Posterior vena cava (tissue), 2 donors: ENCODE measurements at regions of chr1 and their contacts with region 1.

Region 1: GRCh38 chr1:30379684-30380624 is 343.4 kb downstream of the MATN1 start:
- DNase-seq: peak; percentile 66

Region 2: DNA sequence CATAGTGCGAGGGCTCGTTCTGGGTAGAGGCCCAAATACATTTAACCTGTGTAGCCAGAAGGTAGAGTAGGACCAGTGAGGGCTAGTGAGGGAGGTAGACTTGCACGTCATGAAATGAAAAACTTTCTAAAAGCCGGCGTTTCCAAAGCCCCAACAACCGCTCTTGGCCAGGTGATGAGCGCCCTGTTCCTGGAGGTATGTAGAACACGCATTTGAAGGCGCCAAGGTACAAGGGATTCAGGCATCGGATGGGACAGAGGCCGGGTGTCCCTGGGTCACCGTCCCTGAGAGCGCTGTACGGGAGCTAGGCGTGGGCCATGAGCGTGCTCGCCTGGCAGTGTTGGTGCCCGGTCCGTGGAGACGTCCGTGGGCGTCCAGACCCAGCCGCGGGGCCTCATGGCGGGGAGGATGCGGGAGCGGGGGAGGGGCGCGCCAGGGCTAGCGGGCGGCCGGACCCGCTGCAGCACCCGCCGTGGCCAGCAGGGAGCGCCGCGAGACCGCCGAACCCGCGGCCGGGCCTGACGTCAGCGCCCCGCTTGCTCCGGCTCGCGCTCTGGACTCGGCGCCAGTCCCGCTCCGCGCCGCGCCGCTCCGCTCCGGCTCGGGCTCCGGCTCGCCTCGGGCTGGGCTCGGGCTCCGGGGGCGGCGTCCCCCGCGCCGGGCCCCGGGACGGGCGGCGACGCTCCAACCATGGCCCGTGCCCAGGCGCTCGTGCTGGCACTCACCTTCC is 1143.8 kb before region 1 on chr1 and contains the start of gene PTPRU:
- intact Hi-C with region 1: loop called in 1 of 2 experiments (anchors 5 kb)
- DNase-seq: peak; percentile 93
- total RNA-seq, gene PTPRU: 12.3 to 16.5 TPM

Region 3: GRCh38 chr1:30232288-30232899 is 147.6 kb before region 1 on chr1:
- intact Hi-C with region 1: no loop called
- DNase-seq: no peak

Region 4: GRCh38 chr1:30336550-30337323 is 43.2 kb before region 1 on chr1:
- intact Hi-C with region 1: no loop called
- DNase-seq: peak; percentile 48

Region 5: DNA sequence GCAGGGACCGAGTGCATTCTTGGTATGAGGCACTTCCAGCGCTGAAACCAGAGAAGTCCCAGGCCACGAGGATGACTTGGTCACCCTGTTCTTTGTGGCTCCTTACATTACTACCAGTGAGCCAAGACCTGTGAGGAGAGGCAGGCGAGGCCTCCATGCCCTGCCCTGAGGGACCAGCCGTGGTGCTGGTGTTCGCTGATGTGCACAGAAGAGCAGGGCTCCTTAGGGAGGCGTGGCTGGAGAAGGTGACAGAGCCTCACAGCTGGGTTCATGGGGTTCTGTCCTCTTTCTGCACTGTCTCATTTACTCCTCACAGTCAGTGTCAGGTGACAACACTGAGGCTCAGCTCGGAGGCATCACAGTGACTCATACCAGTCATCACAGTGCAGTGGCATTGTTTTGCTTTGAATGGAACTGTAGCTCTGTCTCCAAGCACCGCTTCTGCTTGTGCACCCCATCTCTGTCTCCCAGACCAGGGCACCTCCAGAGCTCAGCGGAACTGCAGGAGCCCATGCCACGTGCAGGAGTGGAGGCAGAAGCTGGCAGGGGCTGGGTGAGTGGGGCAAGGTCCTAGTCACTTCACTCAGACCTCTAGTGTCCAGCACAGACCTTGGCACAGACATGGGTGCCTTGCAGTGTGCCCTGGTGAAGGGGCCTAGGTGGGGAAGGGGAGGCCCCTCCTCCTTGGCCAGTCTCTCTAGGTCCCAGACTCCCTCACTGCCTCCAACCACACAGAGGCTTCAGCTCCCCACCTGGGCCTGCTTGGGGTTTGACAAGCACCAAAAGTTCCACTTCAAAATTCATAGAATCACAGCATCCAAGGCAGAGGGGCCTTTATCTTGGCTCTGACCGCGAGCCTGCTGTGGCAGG is 32.5 kb after region 1 on chr1:
- intact Hi-C with region 1: no loop called
- DNase-seq: peak; percentile 37

Region 6: DNA sequence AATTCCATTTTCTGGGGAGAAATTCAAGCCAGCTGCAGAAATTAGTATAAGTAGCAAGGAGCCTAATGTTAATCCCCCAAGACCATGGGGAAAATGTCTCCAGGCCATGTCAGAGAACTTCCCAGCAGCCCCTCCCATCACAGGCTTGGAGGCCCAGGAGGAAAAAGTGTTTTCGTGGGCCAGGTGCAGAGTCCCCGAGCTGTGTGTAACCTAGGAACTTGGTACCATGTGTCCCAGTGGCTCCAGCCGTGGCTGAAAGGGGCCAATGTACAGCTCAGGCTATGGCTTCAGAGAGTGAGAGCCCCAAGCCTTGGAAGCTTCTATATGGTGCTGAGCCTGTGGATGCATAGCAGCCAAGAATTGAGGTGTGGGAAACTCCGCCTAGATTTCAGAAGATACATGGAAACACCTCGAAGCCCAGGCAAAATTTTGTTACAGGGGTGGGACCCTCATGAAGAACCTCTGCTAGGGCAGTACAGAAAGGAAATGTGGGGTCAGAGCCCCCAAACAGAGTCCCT is 57.2 kb after region 1 on chr1:
- intact Hi-C with region 1: no loop called
- DNase-seq: no peak